H1 (cell line): ENCODE measurements at regions of chr16 and their contacts with region 1.

Region 1: GRCh38 chr16:53346-54236 is at the starts of genes POLR3K and SNRNP25:
- DNase-seq: peak; percentile 92 to 97
- H3K4me3 ChIP-seq: peak within 1 kb of the TSS; percentile 79 to 95 (median 86)
- H3K27ac ChIP-seq: peak within 1 kb of the TSS; percentile 79
- H3K4me1 ChIP-seq: no peaks in the 10 kb centered on the region
- H3K27me3 ChIP-seq: no peaks in the 10 kb centered on the region
- CTCF ChIP-seq: no peak
- EP300 ChIP-seq: no peak
- POLR2A ChIP-seq: peak; percentile 66 to 93
- RAD21 ChIP-seq: no peak
- total RNA-seq, gene POLR3K: 45.4 and 49.6 TPM in 2 replicates
- total RNA-seq, gene SNRNP25: 49.6 and 58.4 TPM in 2 replicates

Region 2: DNA sequence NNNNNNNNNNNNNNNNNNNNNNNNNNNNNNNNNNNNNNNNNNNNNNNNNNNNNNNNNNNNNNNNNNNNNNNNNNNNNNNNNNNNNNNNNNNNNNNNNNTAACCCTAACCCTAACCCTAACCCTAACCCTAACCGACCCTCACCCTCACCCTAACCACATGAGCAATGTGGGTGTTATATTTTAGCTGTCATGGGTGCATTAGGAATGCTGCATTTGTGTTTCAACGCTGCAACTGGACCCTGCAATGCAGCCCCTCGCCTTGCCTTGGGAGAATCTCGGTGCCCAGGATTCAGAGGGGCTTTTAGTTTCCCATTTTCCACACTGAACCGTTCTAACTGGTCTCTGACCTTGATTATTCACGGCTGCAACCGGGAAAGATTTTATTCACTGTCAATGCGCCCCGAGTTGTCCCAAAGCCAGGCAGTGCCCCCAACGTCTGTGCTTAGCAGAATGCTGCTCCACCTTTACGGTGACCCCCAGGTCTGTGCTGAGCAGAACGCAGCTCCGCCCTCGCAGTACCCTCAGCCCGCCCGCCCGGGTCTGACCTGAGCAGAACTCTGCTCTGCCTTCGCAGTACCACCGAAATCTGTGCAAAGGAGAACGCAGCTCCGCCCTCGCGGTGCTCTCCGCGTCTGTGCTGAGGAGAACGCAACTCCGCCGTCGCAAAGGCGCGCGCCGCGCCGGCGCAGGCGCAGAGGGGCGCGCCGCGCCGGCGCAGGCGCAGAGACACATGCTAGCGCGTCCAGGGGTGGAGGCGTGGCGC is 43.5 kb before region 1 on chr16:
- CTCF ChIA-PET with region 1: no interaction called
- POLR2A ChIA-PET with region 1: no interaction called
- DNase-seq: no peak
- H3K4me3 ChIP-seq: peak overlapping the region in 1 of 4 experiments; percentile 22; a peak in 1 of 8 replicates
- H3K27ac ChIP-seq: no peak overlapping the region
- H3K4me1 ChIP-seq: no peaks in the 10 kb centered on the region
- H3K27me3 ChIP-seq: no peaks in the 10 kb centered on the region
- CTCF ChIP-seq: no peak
- EP300 ChIP-seq: no peak
- POLR2A ChIP-seq: no peak
- RAD21 ChIP-seq: no peak

Region 3: GRCh38 chr16:72561-73548 is 19.3 kb after region 1 on chr16 and contains the start of gene RHBDF1:
- CTCF ChIA-PET with region 1: interaction called, 856 read pairs
- POLR2A ChIA-PET with region 1: interaction called, 14 read pairs
- DNase-seq: peak in 1 of 2 experiments; percentile 76
- H3K4me3 ChIP-seq: peak within 1 kb of the TSS; percentile 49 to 75 (median 65)
- H3K27ac ChIP-seq: no peak within 1 kb of the TSS
- H3K4me1 ChIP-seq: peaks cover 9 to 67% (median 44%) of the 10 kb centered on the region in 4 experiments
- H3K27me3 ChIP-seq: peaks cover 0 to 2% (median 0%) of the 10 kb centered on the region in 4 experiments; a peak in 2 of 7 replicates
- CTCF ChIP-seq: no peak
- EP300 ChIP-seq: no peak
- POLR2A ChIP-seq: no peak
- RAD21 ChIP-seq: no peak
- total RNA-seq, gene RHBDF1: 32.5 and 37.4 TPM in 2 replicates